ENCODE measurements at regions of chr22 and their contacts with region 1.

Region 1: GRCh38 chr22:17853073-17853472 is 78.8 kb upstream of the BID start:
- DNase-seq: no peak
- ATAC-seq: no peak
- H3K4me3 ChIP-seq: no peak overlapping the region
- H3K27ac ChIP-seq: no peak overlapping the region
- H3K4me1 ChIP-seq: peaks cover 0 to under 1% of the 10 kb centered on the region in 2 experiments; a peak in 1 of 4 replicates
- H3K27me3 ChIP-seq: no peaks in the 10 kb centered on the region
- CTCF ChIP-seq: no peak
- POLR2A ChIP-seq: no peak
- RAD21 ChIP-seq: no peak

Region 2: DNA sequence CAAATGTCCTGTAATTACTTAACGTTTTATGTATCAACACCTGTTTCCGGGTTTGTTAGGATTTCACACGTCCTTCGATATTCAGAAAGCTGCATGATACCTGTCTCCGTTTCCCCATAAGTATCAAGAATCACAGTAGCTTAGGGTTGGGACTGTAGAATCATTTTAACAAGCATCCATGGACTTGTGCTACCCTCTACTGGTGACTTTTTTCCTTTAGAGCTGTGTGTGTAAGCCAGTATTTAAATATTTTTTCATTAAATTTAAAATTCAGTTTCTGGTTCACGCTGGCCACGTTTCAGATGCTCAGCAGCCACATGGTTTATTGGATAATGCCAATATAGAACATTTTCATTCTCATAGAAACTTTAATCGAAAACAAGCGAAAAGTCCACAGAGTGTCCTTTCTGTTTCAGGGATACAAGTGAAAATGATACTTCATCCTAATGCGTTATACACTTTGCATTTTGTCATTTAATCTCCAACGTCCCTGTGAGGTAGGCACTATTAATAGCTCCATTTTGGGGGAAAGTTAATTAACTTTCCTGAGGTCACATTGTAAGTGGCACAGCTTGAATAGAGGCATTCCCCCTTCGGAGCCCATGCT is 351.3 kb before region 1 on chr22:
- CTCF ChIA-PET with region 1: no interaction called
- POLR2A ChIA-PET with region 1: no interaction called
- RAD21 ChIA-PET with region 1: no interaction called
- intact Hi-C with region 1: no loop called
- DNase-seq: peak; percentile 69
- ATAC-seq: peak; percentile 93
- H3K4me3 ChIP-seq: no peak overlapping the region
- H3K27ac ChIP-seq: no peak overlapping the region
- H3K4me1 ChIP-seq: no peaks in the 10 kb centered on the region
- H3K27me3 ChIP-seq: no peaks in the 10 kb centered on the region
- CTCF ChIP-seq: peak; percentile 55 to 69 (median 68); a peak in 5 of 6 replicates
- POLR2A ChIP-seq: no peak
- RAD21 ChIP-seq: peak; percentile 84

Region 3: DNA sequence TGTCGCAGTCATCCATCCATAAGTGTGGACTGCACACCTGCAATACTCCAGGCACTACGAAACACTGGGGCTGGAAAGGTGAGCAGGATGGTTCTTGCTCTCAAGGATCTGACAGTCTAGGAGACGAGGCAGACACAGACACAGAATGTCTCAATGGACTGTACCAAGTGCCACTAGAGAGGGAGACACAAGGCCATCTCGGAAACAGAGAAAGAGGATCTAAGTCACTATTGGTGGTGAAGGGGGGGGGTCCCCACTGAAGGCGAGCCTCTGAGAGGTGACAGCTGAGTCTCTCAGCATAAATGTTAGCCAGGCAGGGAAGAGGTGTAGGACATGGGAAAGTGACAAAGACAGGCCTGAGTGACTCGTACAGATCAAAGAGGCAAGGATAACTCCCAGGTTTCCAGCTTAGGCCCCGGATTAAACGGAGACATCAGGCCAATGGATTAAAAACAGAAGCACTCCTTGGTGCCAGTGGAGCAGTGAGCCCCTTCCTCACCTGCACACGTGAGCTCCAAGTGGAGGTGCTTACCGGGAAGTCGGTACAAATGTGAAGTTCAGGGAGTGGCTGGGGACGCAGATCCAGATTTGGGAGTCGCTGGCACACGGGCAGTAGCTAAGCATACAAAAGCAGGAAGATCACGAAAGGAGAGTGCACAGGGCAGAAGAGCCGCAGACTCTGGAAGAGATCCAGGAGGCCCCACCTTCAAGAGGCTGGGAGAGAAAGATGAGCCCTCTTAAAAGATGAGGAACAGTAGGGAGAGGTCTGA is 54.1 kb after region 1 on chr22:
- CTCF ChIA-PET with region 1: no interaction called
- POLR2A ChIA-PET with region 1: no interaction called
- RAD21 ChIA-PET with region 1: no interaction called
- intact Hi-C with region 1: loop called (anchors 5 kb)
- DNase-seq: no peak
- ATAC-seq: no peak
- H3K4me3 ChIP-seq: no peak overlapping the region
- H3K27ac ChIP-seq: no peak overlapping the region
- H3K4me1 ChIP-seq: peaks cover 6 to 34% of the 10 kb centered on the region in 2 experiments; a peak in 3 of 4 replicates
- H3K27me3 ChIP-seq: no peaks in the 10 kb centered on the region
- CTCF ChIP-seq: no peak
- POLR2A ChIP-seq: no peak
- RAD21 ChIP-seq: no peak

Measured in HCT116 (cell line).